Activated naive CD4-positive, alpha-beta T cell treated with anti-CD3 and anti-CD28 coated beads for 36 hours (primary cell): ENCODE measurements at regions of chr12 and their contacts with region 1.

Region 1: GRCh38 chr12:26748741-26749431 is 84.1 kb downstream of the ITPR2 start:
- DNase-seq: no peak
- H3K4me3 Mint-ChIP-seq: peak overlapping the region; percentile 12
- H3K27ac Mint-ChIP-seq: peak overlapping the region; percentile 88
- H3K4me1 Mint-ChIP-seq: peaks cover 64% of the 10 kb centered on the region
- H3K27me3 Mint-ChIP-seq: no peaks in the 10 kb centered on the region

Region 2: GRCh38 chr12:25052196-25052913 is 1696.5 kb before region 1 on chr12:
- CTCF ChIA-PET with region 1: no interaction called
- intact Hi-C with region 1: loop called (anchors 5 kb)
- DNase-seq: peak; percentile 62
- H3K4me3 Mint-ChIP-seq: peak overlapping the region; percentile 89
- H3K27ac Mint-ChIP-seq: peak overlapping the region; percentile 99
- H3K4me1 Mint-ChIP-seq: peaks cover 32% of the 10 kb centered on the region
- H3K27me3 Mint-ChIP-seq: no peaks in the 10 kb centered on the region

Region 3: DNA sequence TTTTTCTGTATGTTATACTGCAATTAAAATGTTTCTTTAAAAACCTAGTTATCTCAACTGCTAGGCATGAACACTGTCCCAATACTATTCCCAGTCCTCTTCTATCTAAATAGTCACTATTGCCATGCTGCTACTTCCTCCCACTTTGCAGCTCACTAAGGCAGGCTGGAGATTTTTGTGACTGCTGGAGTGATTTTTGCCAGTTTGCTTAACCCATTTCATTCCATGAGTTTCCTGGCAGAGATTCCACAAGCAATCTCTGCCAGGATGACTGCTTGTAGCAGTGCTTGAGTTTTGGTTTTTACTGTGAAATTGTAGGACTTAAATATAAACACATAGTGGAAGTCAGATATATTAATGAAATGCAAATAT is 704.9 kb before region 1 on chr12:
- CTCF ChIA-PET with region 1: no interaction called
- intact Hi-C with region 1: no loop called
- DNase-seq: no peak
- H3K4me3 Mint-ChIP-seq: no peak overlapping the region
- H3K27ac Mint-ChIP-seq: no peak overlapping the region
- H3K4me1 Mint-ChIP-seq: no peaks in the 10 kb centered on the region
- H3K27me3 Mint-ChIP-seq: peaks cover 3% of the 10 kb centered on the region

Region 4: DNA sequence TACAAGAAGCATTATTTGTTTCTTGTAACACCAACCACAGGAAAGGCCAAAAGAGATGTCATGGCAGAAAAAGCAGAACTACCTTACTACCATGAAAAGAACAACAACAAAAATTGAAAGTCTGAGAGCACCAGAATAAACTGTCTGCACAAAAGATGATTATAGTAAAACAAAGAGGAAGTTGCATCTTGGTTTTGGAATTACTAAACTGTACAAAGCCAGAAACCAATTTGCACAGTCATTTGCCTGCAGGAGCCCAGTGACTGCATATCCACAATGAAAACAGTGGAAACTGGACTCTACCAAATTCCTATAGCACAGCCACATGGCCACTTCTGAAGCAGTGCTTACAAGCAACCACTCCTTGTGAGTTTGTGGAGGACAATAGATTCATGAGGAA is 277.3 kb before region 1 on chr12:
- CTCF ChIA-PET with region 1: no interaction called
- intact Hi-C with region 1: loop called (anchors 2 kb)
- DNase-seq: peak; percentile 39
- H3K4me3 Mint-ChIP-seq: no peak overlapping the region
- H3K27ac Mint-ChIP-seq: peak overlapping the region; percentile 33
- H3K4me1 Mint-ChIP-seq: peaks cover 12% of the 10 kb centered on the region
- H3K27me3 Mint-ChIP-seq: no peaks in the 10 kb centered on the region

Region 5: GRCh38 chr12:26832822-26833742 is 84.2 kb after region 1 on chr12 and contains the start of gene ITPR2:
- CTCF ChIA-PET with region 1: interaction called, 5 read pairs
- intact Hi-C with region 1: loop called (anchors 1 kb)
- DNase-seq: peak; percentile 95
- H3K4me3 Mint-ChIP-seq: peak within 1 kb of the TSS; percentile 99
- H3K27ac Mint-ChIP-seq: peak within 1 kb of the TSS; percentile 97
- H3K4me1 Mint-ChIP-seq: peaks cover 30% of the 10 kb centered on the region
- H3K27me3 Mint-ChIP-seq: no peaks in the 10 kb centered on the region
- total RNA-seq, gene ITPR2: 24.4 to 24.5 TPM

Region 6: DNA sequence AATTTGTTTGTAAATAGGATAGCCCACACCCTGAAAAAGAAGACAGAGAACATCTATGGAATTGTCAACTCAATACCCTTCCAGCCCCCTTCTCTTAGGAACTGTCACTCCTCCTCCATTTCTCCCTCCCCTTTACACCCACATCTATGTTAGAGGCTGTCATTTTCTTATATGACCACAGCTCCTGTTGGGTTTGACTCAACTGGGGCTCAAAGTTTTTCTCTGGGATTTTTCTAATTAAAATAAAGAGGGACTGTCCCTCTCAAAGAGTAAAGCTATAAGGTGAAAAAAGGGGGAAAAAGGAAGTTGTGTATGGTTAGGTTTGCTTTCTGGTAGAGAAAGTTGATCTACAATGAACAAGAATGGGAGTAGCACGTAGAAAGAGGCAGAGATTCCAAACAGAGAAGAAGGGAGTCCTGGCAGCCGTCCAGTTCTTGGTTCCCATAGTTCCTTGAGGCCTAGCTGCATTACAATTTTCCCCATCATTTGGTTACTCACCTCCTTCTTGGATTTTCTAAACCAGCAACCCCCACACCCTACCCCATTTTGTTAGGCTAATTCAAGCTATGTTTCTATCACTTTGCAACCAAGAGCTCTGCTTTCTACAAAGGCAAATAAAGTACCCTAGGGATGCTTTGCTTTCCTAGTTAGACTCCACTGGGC is 450.9 kb after region 1 on chr12:
- CTCF ChIA-PET with region 1: no interaction called
- intact Hi-C with region 1: loop called (anchors 1 kb)
- DNase-seq: peak; percentile 19
- H3K4me3 Mint-ChIP-seq: no peak overlapping the region
- H3K27ac Mint-ChIP-seq: no peak overlapping the region
- H3K4me1 Mint-ChIP-seq: peaks cover 8% of the 10 kb centered on the region
- H3K27me3 Mint-ChIP-seq: no peaks in the 10 kb centered on the region

Region 7: DNA sequence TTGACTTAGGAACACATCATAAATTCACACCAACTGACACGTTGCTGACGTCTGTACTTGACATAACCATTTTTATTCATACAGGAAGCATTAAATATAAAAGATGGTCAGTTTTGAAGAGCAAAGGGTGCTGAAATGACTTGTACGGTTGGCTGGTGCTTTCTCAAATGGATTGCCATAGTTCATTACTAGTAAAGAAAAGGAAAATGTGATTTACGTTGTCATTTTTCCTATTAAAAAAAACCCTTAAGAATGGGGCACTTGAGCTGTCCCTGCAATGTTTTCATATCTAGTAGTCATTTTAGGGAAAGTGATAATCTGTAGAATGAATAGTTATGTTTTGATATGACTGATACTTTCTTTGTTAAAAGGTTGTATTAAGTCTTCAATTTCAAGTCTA is 1053.6 kb after region 1 on chr12:
- CTCF ChIA-PET with region 1: no interaction called
- intact Hi-C with region 1: loop called (anchors 5 kb)
- DNase-seq: peak; percentile 49
- H3K4me3 Mint-ChIP-seq: no peak overlapping the region
- H3K27ac Mint-ChIP-seq: peak overlapping the region; percentile 85
- H3K4me1 Mint-ChIP-seq: peaks cover 59% of the 10 kb centered on the region
- H3K27me3 Mint-ChIP-seq: peaks cover 4% of the 10 kb centered on the region